Transverse colon (tissue), 4 donors: ENCODE measurements at regions of chr9 and their contacts with region 1.

Region 1: GRCh38 chr9:37592108-37592951 is at the start of gene TOMM5:
- DNase-seq: peak; percentile 94
- H3K4me3 ChIP-seq: peak within 1 kb of the TSS; percentile 56 to 86 (median 69)
- H3K27ac ChIP-seq: peak within 1 kb of the TSS; percentile 86 to 89 (median 88)
- H3K4me1 ChIP-seq: peaks cover 19 to 40% (median 25%) of the 10 kb centered on the region in 4 donors
- H3K27me3 ChIP-seq: no peaks in the 10 kb centered on the region
- CTCF ChIP-seq: no peak
- EP300 ChIP-seq: no peak
- POLR2A ChIP-seq: peak; percentile 89
- total RNA-seq, gene TOMM5: 14.3 to 70.3 (median 63.1) TPM

Region 2: DNA sequence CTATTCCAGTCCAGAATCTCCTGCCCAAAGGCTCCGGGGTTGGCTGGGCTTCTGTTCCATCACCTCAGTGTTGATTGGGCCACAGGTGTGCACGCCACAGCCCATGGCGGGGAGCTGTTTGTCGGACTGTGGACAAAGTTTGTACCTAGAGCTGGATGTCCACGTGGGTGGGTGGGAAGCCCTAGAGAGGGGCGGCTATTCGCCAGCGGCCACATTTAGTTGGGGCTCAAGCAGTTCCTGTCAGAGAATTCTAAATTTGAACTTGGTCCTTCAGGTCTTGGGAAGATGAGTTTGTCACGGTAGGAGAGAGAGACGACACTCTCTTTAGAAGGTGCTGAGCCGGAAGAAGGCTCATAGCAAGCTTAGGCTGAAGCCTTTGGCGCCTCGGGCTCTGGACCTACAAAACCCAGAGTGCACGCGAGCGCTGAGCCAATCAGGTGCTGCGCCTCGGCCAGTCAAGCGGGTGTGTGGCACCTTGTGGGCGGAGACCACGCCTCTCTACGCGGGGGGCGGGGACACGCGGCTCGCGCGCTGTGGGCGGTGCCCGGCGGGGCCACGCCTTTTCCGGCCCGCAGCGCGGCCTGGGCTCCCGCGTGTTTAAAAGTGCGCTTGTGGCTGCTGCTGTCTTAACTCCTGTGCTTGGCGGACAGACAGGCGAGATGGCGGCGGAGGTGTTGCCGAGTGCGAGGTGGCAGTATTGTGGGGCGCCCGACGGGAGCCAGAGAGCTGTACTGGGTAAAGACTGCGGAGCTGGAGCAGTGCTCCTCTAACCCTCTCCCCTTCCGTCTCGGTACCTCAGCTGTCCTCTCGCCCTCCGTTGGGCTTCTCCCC is 106.7 kb before region 1 on chr9 and contains the start of gene POLR1E:
- in situ Hi-C with region 1: loop called in 2 of 4 experiments (anchors 10 kb)
- intact Hi-C with region 1: no loop called
- DNase-seq: peak; percentile 97
- H3K4me3 ChIP-seq: peak within 1 kb of the TSS; percentile 57 to 90 (median 63)
- H3K27ac ChIP-seq: peak within 1 kb of the TSS; percentile 82 to 88 (median 86)
- H3K4me1 ChIP-seq: peaks cover 16 to 23% (median 19%) of the 10 kb centered on the region in 4 donors
- H3K27me3 ChIP-seq: no peaks in the 10 kb centered on the region
- CTCF ChIP-seq: no peak
- EP300 ChIP-seq: no peak
- POLR2A ChIP-seq: peak; percentile 76
- total RNA-seq, gene POLR1E: 4.0 to 15.7 (median 9.0) TPM

Region 3: DNA sequence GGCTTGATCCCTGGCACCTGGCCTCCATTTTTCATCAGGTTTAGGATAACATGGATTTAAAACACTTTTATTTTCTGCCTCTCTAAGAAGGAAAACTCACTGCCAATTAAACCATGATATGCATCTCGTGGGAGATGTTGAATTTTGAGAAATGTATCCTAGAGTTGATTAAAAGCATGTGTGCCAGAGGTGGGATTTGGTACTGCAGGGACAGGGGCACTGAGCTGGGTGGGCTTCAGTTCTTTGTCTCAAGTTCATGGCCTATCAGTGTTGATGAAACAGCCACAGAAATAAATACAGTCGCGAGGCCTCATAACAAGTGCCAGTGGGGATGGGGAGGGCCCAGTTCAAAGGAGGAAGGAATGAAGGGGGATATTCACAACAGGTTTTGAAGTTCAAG is 71.7 kb before region 1 on chr9:
- in situ Hi-C with region 1: no loop called
- intact Hi-C with region 1: no loop called
- DNase-seq: no peak
- H3K4me3 ChIP-seq: no peak overlapping the region
- H3K27ac ChIP-seq: no peak overlapping the region
- H3K4me1 ChIP-seq: no peaks in the 10 kb centered on the region
- H3K27me3 ChIP-seq: no peaks in the 10 kb centered on the region
- CTCF ChIP-seq: peak in 1 of 5 experiments; percentile 6
- EP300 ChIP-seq: no peak
- POLR2A ChIP-seq: no peak

Region 4: GRCh38 chr9:37784616-37785483 is 192.5 kb after region 1 on chr9 and contains the start of gene EXOSC3:
- in situ Hi-C with region 1: loop called in 1 of 4 experiments (anchors 25 kb)
- intact Hi-C with region 1: no loop called
- DNase-seq: peak; percentile 91
- H3K4me3 ChIP-seq: peak within 1 kb of the TSS; percentile 68 to 93 (median 88)
- H3K27ac ChIP-seq: peak within 1 kb of the TSS; percentile 84 to 93 (median 89)
- H3K4me1 ChIP-seq: peaks cover 11 to 23% (median 15%) of the 10 kb centered on the region in 4 donors
- H3K27me3 ChIP-seq: no peaks in the 10 kb centered on the region
- CTCF ChIP-seq: peak in 3 of 5 experiments; percentile 10 to 33 (median 31)
- EP300 ChIP-seq: no peak
- POLR2A ChIP-seq: peak; percentile 75
- total RNA-seq, gene EXOSC3: 2.6 to 46.2 (median 14.7) TPM

Region 5: DNA sequence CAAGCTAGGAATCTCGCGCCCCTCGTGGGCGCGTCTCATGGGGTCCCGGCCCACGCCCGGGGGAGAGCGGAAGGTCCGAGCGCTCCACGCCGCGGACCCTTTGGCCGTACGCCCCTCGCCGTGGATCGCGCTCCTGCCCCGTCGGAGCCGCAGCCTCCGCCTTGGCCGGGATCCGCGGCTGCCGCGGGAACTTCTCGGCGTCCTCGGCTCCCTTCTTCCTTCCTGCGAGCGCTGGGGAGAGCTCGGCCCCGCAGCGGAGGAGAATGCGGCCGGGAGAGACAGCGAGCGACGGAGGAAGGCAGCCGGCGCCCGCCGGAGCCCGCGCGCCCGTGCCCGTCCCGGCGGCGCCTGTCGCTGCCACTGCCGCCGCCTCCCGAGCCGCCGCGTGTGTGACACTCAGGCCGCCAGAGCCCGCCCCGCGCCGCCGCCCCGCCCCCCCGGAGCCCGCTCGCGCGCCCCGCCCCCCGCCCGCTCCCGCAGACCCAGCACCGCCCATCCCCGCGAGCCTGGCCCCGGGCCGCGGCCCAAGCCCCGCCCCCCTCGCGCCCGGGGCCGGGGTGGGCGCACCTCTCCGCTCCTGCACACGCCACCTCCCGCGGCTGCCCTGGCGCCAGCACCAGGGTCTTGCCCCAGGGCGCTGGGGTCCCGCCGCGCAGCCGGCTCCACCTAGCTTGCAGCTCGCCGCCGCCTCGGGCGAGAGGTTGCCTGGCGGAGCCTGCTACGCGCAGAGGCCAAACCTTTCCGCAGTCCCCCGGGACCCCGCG is 476.7 kb after region 1 on chr9 and contains the start of gene SHB:
- in situ Hi-C with region 1: loop called in 1 of 4 experiments (anchors 25 kb)
- intact Hi-C with region 1: no loop called
- DNase-seq: peak; percentile 88
- H3K4me3 ChIP-seq: peak within 1 kb of the TSS; percentile 86 to 99 (median 94)
- H3K27ac ChIP-seq: peak within 1 kb of the TSS; percentile 93 to 98 (median 98)
- H3K4me1 ChIP-seq: peaks cover 11 to 58% (median 42%) of the 10 kb centered on the region in 4 donors
- H3K27me3 ChIP-seq: no peaks in the 10 kb centered on the region
- CTCF ChIP-seq: peak in 3 of 5 experiments; percentile 36 to 71 (median 55)
- EP300 ChIP-seq: no peak
- POLR2A ChIP-seq: peak; percentile 60
- total RNA-seq, gene SHB: 11.9 to 33.7 (median 22.2) TPM

Region 6: GRCh38 chr9:38380872-38381534 is 788.7 kb after region 1 on chr9:
- in situ Hi-C with region 1: no loop called
- intact Hi-C with region 1: no loop called
- DNase-seq: no peak
- H3K4me3 ChIP-seq: no peak overlapping the region
- H3K27ac ChIP-seq: peak overlapping the region in 1 of 4 donors; percentile 60
- H3K4me1 ChIP-seq: peaks cover 0 to 16% (median 9%) of the 10 kb centered on the region in 4 donors
- H3K27me3 ChIP-seq: no peaks in the 10 kb centered on the region
- CTCF ChIP-seq: no peak
- EP300 ChIP-seq: no peak
- POLR2A ChIP-seq: no peak